ENCODE measurements at regions of chr22 and their contacts with region 1.

Region 1: DNA sequence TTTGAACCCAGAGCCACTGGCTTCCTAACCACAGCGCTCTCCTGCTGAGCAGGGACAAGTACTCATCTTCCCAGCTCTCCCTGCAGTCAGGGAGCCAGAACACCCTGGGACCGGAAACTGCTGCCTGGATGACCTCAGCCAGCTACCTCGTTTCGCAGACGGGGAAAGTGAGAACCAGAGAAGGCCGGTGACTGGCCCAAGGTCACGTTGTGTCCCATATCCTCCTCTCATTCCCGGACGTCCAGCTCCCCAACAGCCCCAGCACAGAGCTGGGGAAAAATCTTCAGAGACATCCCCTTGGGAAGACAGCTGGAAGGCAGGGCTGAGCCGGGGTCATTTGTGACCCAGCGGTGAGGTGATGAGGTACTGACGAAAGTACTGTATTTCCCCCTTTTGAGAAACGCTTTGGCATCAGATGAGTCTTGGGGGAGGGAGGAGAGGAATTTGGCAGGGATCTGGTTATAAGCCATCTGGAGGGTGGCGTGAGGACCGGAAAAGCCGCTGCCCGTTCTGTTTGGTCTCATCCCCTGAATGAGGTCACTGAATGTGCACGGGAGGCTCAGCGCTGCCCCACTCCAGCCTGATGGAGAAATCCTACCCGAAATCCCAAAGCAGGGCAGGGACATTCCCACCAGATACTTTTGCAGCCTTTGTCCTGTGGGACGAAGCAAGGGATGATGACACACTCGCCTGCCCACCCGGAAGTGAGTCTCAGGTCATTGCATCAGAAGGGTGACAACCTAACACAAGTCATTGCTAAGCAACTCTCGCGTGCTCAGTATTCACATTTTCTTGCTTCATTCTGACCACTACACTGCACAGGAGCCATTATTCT is 41.1 kb downstream of the LIF start:
- DNase-seq: peak; percentile 100
- ATAC-seq: peak; percentile 63
- H3K4me3 ChIP-seq: no peak overlapping the region
- H3K27ac ChIP-seq: peak overlapping the region; percentile 97
- H3K4me1 ChIP-seq: peaks cover 54% of the 10 kb centered on the region
- H3K27me3 ChIP-seq: no peaks in the 10 kb centered on the region
- CTCF ChIP-seq: no peak
- POLR2A ChIP-seq: no peak; the same call in 1 of the 2 replicates
- RAD21 ChIP-seq: peak; percentile 23; the same call in 1 of the 2 replicates

Region 2: GRCh38 chr22:29658176-29658575 is 547.3 kb before region 1 on chr22:
- CTCF ChIA-PET with region 1: no interaction called
- POLR2A ChIA-PET with region 1: no interaction called
- dilution Hi-C with region 1: no loop called
- in situ Hi-C with region 1: no loop called
- intact Hi-C with region 1: no loop called
- DNase-seq: no peak
- ATAC-seq: no peak
- H3K4me3 ChIP-seq: no peak overlapping the region
- H3K27ac ChIP-seq: no peak overlapping the region
- H3K4me1 ChIP-seq: peaks cover 3% of the 10 kb centered on the region; the same call in 1 of the 2 replicates
- H3K27me3 ChIP-seq: no peaks in the 10 kb centered on the region
- CTCF ChIP-seq: no peak
- POLR2A ChIP-seq: no peak
- RAD21 ChIP-seq: no peak

Region 3: DNA sequence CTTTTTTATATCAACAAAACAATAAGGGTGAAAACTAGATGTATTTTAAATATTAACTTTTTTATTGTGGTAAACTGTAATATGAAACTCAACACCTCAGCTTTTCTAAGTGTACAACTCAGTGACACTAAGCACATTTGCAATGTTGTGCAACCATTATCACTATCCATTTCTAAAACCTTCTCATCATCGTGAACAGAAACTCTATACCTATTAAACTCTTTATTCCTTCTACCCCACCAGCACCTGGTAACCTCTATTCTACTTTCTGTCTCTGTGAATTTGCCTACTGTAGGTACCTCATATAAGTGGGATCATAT is 115.9 kb before region 1 on chr22:
- CTCF ChIA-PET with region 1: no interaction called
- POLR2A ChIA-PET with region 1: no interaction called
- dilution Hi-C with region 1: no loop called
- in situ Hi-C with region 1: no loop called
- intact Hi-C with region 1: no loop called
- DNase-seq: no peak
- ATAC-seq: no peak
- H3K4me3 ChIP-seq: no peak overlapping the region
- H3K27ac ChIP-seq: no peak overlapping the region; the same call in 1 of the 2 replicates
- H3K4me1 ChIP-seq: no peaks in the 10 kb centered on the region
- H3K27me3 ChIP-seq: no peaks in the 10 kb centered on the region
- CTCF ChIP-seq: no peak
- POLR2A ChIP-seq: no peak
- RAD21 ChIP-seq: no peak

Region 4: GRCh38 chr22:30116362-30117117 is 89.0 kb before region 1 on chr22:
- CTCF ChIA-PET with region 1: no interaction called
- POLR2A ChIA-PET with region 1: interaction called, 3 read pairs
- dilution Hi-C with region 1: no loop called
- in situ Hi-C with region 1: loop called (anchors 5 kb)
- intact Hi-C with region 1: loop called (anchors 2 kb)
- DNase-seq: peak; percentile 78
- ATAC-seq: peak; percentile 72
- H3K4me3 ChIP-seq: no peak overlapping the region
- H3K27ac ChIP-seq: no peak overlapping the region
- H3K4me1 ChIP-seq: peaks cover 12% of the 10 kb centered on the region
- H3K27me3 ChIP-seq: no peaks in the 10 kb centered on the region
- CTCF ChIP-seq: no peak
- POLR2A ChIP-seq: no peak
- RAD21 ChIP-seq: no peak

Region 5: DNA sequence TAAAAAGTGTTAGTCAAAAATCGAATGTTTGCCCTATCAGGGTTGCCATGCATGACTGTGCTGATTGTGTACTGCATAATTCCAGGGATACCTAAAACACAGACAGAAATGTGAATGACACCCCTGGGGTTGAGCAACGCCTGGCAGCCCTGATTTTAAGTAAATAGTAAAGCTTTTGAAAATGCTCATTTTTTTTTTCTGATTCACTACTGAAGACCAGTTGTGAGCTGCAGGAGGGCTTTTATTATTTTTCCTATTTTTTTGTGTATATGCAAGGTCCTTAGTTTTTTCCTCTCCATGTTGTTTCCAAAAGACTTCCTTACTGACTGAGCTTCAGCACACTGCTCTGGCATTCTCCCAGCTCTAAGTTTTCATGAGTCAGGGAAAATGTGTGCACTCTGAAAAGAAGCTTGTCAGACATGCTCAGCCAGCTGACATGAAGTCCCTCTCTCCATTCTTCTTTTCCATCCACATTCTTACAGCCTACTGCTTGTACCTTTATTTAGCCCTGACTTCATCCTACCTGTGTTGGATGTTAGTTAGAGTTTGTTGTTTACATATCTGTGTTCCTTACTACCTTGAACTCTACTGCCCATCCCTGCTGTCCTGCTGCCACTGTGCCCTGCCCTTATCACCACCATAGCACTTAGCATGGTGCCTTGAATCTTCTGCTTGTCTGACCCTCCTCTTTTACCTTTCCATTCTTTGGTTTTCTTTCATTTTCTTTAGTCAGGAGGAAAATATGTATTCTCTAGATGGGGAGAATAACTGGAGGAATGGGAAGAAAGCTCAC is 45.7 kb before region 1 on chr22:
- CTCF ChIA-PET with region 1: no interaction called
- POLR2A ChIA-PET with region 1: no interaction called
- dilution Hi-C with region 1: no loop called
- in situ Hi-C with region 1: no loop called
- intact Hi-C with region 1: loop called (anchors 2 kb)
- DNase-seq: peak; percentile 86
- ATAC-seq: peak; percentile 89
- H3K4me3 ChIP-seq: no peak overlapping the region
- H3K27ac ChIP-seq: peak overlapping the region; percentile 84; the same call in 1 of the 2 replicates
- H3K4me1 ChIP-seq: peaks cover 9% of the 10 kb centered on the region
- H3K27me3 ChIP-seq: no peaks in the 10 kb centered on the region
- CTCF ChIP-seq: no peak
- POLR2A ChIP-seq: no peak
- RAD21 ChIP-seq: no peak

Region 6: GRCh38 chr22:30235687-30236170 is 30.2 kb after region 1 on chr22:
- CTCF ChIA-PET with region 1: no interaction called
- POLR2A ChIA-PET with region 1: interaction called, 18 read pairs
- dilution Hi-C with region 1: no loop called
- in situ Hi-C with region 1: no loop called
- intact Hi-C with region 1: loop called (anchors 1 kb)
- DNase-seq: peak; percentile 88
- ATAC-seq: peak; percentile 61
- H3K4me3 ChIP-seq: no peak overlapping the region
- H3K27ac ChIP-seq: peak overlapping the region; percentile 91
- H3K4me1 ChIP-seq: peaks cover 35% of the 10 kb centered on the region
- H3K27me3 ChIP-seq: no peaks in the 10 kb centered on the region
- CTCF ChIP-seq: no peak
- POLR2A ChIP-seq: no peak
- RAD21 ChIP-seq: no peak

Region 7: GRCh38 chr22:30245985-30246901 is 40.7 kb after region 1 on chr22 and contains the start of gene LIF:
- CTCF ChIA-PET with region 1: no interaction called
- POLR2A ChIA-PET with region 1: interaction called, 4 read pairs
- dilution Hi-C with region 1: no loop called
- in situ Hi-C with region 1: no loop called
- intact Hi-C with region 1: loop called (anchors 2 kb)
- DNase-seq: peak; percentile 86
- ATAC-seq: peak; percentile 6
- H3K4me3 ChIP-seq: peak within 1 kb of the TSS; percentile 87
- H3K27ac ChIP-seq: peak within 1 kb of the TSS; percentile 100
- H3K4me1 ChIP-seq: peaks cover 65% of the 10 kb centered on the region
- H3K27me3 ChIP-seq: no peaks in the 10 kb centered on the region
- CTCF ChIP-seq: 0 out of 2 replicates have a peak, but pooled peaks have one; percentile 12
- POLR2A ChIP-seq: peak; percentile 98
- RAD21 ChIP-seq: no peak
- total RNA-seq, gene LIF: 79.4 and 130 TPM in 2 replicates